Tibial artery (tissue), 4 donors: ENCODE measurements at regions of chr6 and their contacts with region 1.

Region 1: DNA sequence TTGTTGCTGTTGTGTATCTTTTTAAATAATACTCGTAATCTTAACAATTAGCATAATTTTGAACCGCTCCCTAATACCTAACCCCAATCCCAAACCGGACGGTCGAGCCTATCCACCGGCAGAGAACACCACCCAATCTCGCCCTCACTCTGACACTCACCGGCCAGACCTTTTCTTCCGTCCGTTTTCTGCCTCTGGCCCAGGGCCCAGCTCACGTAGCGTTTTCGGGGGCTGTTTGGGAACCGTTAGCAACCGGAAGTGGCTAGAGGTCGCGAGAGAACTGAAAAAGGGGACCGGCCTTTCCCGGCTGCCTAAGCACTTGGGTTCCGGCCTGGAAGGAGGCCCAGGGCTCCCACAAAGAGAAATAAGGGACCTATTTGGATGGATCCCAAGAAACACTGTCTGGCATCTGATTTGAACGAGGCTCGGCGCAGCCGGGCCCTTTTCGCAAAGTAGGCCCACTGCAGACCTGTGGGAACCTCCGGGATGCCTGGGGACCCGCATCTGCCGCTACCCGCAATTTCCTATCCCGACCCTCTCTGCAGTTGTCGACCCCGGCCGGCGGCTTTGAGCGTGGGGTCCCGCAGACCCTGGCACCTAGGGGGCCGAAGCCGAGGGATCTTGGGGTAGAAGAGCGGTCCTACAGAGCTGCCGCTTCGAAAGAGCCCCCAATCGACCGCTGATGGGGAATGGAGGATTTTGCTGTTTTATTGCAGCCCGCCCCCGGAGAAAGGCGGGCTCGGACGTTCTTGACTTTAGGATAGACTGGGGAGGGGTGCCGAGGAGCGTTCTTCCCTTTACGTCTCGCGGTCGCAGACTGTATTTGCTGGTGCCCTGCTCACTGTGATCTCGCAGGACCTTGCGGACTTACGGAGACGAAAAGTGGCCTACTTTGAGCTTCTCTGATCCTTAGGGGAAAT is 4.8 kb upstream of the ZKSCAN8 start:
- DNase-seq: peak; percentile 90 to 93
- H3K4me3 ChIP-seq: peak overlapping the region; percentile 72 to 81
- H3K27ac ChIP-seq: peak overlapping the region; percentile 95 to 98
- H3K4me1 ChIP-seq: peaks cover 0 to 30% (median 13%) of the 10 kb centered on the region in 4 donors
- H3K27me3 ChIP-seq: no peaks in the 10 kb centered on the region
- CTCF ChIP-seq: no peak

Region 2: GRCh38 chr6:28218271-28219248 is 81.7 kb after region 1 on chr6:
- intact Hi-C with region 1: loop called (anchors 10 kb)
- DNase-seq: peak; percentile 62 to 88
- H3K4me3 ChIP-seq: peak overlapping the region; percentile 60 to 65
- H3K27ac ChIP-seq: peak overlapping the region; percentile 64 to 72
- H3K4me1 ChIP-seq: peaks cover 0 to 12% (median 6%) of the 10 kb centered on the region in 4 donors
- H3K27me3 ChIP-seq: peaks cover 0 to 20% of the 10 kb centered on the region in 2 donors
- CTCF ChIP-seq: no peak